ENCODE measurements at regions of chr17 and their contacts with region 1.

Region 1: GRCh38 chr17:1648963-1649843 is 463 bp downstream of the RILP start:
- DNase-seq: peak; percentile 100
- H3K4me3 ChIP-seq: peak overlapping the region; percentile 57 to 74
- H3K27ac ChIP-seq: peak overlapping the region; percentile 64 to 86
- H3K4me1 ChIP-seq: peaks cover 9 to 16% of the 10 kb centered on the region in 2 experiments; a peak in 2 of 4 replicates
- H3K27me3 ChIP-seq: no peaks in the 10 kb centered on the region
- CTCF ChIP-seq: no peak
- EP300 ChIP-seq: 0 out of 4 replicates have a peak, but pooled peaks of 1 of the 2 experiments have one; percentile 21
- RAD21 ChIP-seq: no peak; the same call in 1 of the 2 replicates

Region 2: DNA sequence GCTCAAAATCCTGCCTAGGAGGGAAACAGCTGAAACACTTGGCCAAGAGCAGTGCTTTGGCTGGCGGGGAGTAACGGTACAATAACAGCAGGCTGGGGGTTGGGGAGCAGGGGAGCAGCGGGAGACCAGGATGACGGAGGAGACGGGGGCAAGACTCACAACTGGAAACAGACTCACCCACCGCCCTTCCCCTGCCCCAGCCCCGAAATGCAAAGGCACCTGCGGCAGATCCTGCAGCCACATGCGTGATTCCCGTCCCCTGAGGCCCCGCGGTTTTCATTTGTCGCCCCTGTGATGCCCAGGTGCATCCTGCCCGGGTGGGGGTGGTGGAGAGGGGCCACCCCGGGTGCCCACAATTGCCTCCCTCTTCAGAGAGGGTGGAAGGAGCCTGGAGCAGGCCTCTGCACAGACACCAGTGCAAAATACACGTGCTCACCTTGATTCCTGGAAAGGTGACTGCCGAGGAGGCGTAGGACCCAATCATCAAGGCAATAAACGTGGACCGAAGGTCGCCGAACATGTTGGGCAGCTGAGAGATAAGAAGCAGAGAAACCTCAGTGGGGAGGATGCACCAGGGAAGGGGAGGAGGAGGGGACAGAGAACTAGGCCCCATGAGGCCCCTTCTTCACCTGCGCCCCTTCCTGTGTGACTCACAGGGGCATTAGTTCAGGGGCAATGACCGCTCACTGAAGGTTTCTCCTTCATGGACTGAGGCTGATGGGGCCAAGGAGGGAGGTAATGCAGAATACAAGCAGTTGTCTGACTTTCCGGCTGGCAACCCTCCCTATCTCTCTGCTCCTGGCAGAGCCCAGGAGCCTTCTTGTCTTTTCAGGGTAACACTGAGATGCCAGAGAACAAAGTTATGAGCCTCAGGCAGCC is 56.2 kb before region 1 on chr17:
- CTCF ChIA-PET with region 1: no interaction called
- POLR2A ChIA-PET with region 1: no interaction called
- DNase-seq: no peak
- H3K4me3 ChIP-seq: no peak overlapping the region
- H3K27ac ChIP-seq: no peak overlapping the region
- H3K4me1 ChIP-seq: peaks cover 0 to 13% of the 10 kb centered on the region in 2 experiments; a peak in 2 of 4 replicates
- H3K27me3 ChIP-seq: no peaks in the 10 kb centered on the region
- CTCF ChIP-seq: no peak
- EP300 ChIP-seq: no peak
- RAD21 ChIP-seq: no peak

Region 3: GRCh38 chr17:1684378-1685189 is 35.4 kb after region 1 on chr17 and contains the start of gene PRPF8:
- CTCF ChIA-PET with region 1: interaction called, 10 read pairs
- POLR2A ChIA-PET with region 1: no interaction called
- DNase-seq: peak; percentile 99
- H3K4me3 ChIP-seq: peak within 1 kb of the TSS; percentile 74 to 87
- H3K27ac ChIP-seq: peak within 1 kb of the TSS; percentile 85 to 88
- H3K4me1 ChIP-seq: peaks cover 4 to 9% of the 10 kb centered on the region in 2 experiments; a peak in 2 of 4 replicates
- H3K27me3 ChIP-seq: no peaks in the 10 kb centered on the region
- CTCF ChIP-seq: no peak
- EP300 ChIP-seq: no peak
- RAD21 ChIP-seq: no peak
- polyA plus RNA-seq, gene PRPF8: 123 and 149 TPM in 2 replicates